Activated CD4-positive, alpha-beta memory T cell treated with anti-CD3 and anti-CD28 coated beads for 36 hours (primary cell): ENCODE measurements at regions of chr17 and their contacts with region 1.

Region 1: DNA sequence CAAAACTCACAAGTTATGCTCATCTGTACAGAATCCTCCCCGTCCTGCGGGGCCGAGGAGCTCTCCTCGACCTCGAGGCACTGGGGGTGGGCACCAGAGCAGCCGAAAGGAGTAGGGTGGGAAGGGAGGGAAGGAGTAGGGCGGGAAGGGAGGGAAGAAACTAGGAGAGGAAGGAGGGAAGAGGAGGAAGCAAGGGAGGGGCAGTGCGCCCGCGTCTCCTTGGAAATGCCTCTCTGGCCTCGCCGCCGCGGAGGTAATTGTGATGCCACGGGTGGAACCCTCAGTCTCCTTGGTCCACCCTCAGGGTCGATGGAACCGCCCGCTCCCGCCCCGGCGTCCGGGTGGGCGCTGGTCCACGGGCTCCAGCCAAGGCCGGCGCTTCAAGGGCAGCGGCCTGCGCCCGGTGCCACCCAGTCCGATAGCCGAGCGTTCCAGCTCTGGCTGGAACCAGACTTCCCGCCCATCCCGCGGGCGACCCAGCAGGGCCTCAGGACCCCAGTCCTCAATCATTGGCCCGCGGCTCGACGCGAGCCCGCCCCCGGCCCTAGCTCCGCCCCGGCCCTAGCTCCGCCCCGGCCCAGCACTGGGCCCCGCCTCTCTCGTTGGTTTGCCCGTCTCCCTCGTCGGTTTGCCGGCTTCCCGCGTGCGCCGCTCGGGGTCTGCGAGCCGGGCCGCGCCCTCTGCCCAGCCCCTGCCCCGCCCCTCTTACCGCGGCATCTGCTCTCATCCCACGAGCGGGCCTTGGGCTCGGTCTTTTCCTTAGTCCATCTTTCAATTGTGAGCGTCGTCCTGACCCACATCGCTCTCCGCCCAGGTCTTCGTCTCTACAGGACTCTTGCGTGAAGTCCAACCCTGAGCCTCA is 596 bp downstream of the PROCA1 start:
- DNase-seq: peak; percentile 94
- H3K4me3 Mint-ChIP-seq: peak overlapping the region; percentile 73
- H3K27ac Mint-ChIP-seq: peak overlapping the region; percentile 80
- H3K4me1 Mint-ChIP-seq: peaks cover 23% of the 10 kb centered on the region
- H3K27me3 Mint-ChIP-seq: peaks cover 12% of the 10 kb centered on the region

Region 2: DNA sequence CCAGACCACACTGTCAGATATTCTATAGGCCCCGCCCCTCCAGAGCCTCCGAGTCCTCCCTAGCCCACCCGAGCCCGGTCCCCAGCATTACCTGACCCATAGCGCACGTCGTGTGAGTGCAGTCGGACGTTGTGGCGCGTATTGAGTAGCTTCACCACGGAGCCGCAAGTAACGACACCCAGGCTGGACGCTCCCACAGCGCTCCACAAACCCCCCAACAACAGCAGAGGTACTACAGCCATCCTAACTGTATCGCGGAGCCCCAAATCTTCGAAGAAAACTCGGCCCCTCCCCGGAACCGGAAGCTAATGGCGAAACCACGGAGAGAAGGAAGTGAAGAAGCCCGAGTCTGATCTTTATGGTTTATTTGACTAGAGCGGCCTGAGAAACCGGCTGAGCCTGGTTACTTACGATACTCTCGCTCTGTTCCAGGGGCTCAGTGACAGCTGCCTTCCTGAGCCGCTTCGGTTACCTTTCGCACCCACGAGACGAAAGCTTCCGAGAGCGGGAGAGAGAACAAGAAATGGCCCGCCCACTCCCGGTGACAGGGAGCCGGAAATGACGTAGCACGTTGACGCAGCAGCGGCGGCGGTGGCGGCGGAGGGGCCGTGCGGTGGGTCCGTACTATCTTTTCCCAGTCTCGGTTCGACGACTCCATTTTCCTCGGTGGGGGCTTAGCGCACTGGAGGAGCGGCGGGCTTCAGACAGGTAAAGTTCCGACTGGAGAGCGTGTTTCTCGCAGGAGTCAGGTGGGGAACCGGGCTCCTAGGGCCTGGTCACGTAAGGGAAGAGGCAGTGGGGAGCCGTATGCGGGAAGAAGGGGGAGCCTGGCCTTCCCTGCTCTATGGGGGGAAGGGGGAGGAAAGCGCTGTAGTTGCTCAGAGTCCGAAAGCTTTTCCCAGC is 49.2 kb before region 1 on chr17 and contains the starts of genes SDF2 and SUPT6H:
- CTCF ChIA-PET with region 1: no interaction called
- POLR2A ChIA-PET with region 1: interaction called, 15 read pairs
- intact Hi-C with region 1: loop called (anchors 2 kb)
- DNase-seq: peak; percentile 97
- H3K4me3 Mint-ChIP-seq: peak within 1 kb of the TSS; percentile 97
- H3K27ac Mint-ChIP-seq: peak within 1 kb of the TSS; percentile 97
- H3K4me1 Mint-ChIP-seq: peaks cover 43% of the 10 kb centered on the region
- H3K27me3 Mint-ChIP-seq: no peaks in the 10 kb centered on the region
- total RNA-seq, gene SDF2: 38.4 to 43.5 TPM
- total RNA-seq, gene SUPT6H: 59.4 to 65.9 TPM

Region 3: GRCh38 chr17:28854457-28855350 is 143.6 kb after region 1 on chr17 and contains the start of gene ERAL1:
- CTCF ChIA-PET with region 1: no interaction called
- POLR2A ChIA-PET with region 1: no interaction called
- intact Hi-C with region 1: no loop called
- DNase-seq: peak; percentile 92
- H3K4me3 Mint-ChIP-seq: peak within 1 kb of the TSS; percentile 81
- H3K27ac Mint-ChIP-seq: peak within 1 kb of the TSS; percentile 86
- H3K4me1 Mint-ChIP-seq: peaks cover 23% of the 10 kb centered on the region
- H3K27me3 Mint-ChIP-seq: no peaks in the 10 kb centered on the region
- total RNA-seq, gene ERAL1: 43.0 to 48.5 TPM